ENCODE measurements at regions of chr4 and their contacts with region 1.

Region 1: GRCh38 chr4:41887821-41888686 is 47.2 kb upstream of the TMEM33 start:
- DNase-seq: peak; percentile 57 to 84 (median 76)
- H3K4me3 ChIP-seq: no peak overlapping the region
- H3K27ac ChIP-seq: no peak overlapping the region
- H3K4me1 ChIP-seq: no peaks in the 10 kb centered on the region
- H3K27me3 ChIP-seq: peaks cover 6 to 45% (median 11%) of the 10 kb centered on the region in 5 experiments

Region 2: GRCh38 chr4:41257257-41257901 is 630.7 kb before region 1 on chr4:
- CTCF ChIA-PET with region 1: interaction called, 16 read pairs
- POLR2A ChIA-PET with region 1: no interaction called
- DNase-seq: peak; percentile 58 to 86 (median 83)
- H3K4me3 ChIP-seq: peak overlapping the region; percentile 51 to 75 (median 61)
- H3K27ac ChIP-seq: no peak overlapping the region
- H3K4me1 ChIP-seq: peaks cover 5 to 25% (median 17%) of the 10 kb centered on the region in 4 experiments
- H3K27me3 ChIP-seq: peaks cover 10 to 29% (median 14%) of the 10 kb centered on the region in 5 experiments

Region 3: GRCh38 chr4:41692717-41693345 is 195.2 kb before region 1 on chr4:
- CTCF ChIA-PET with region 1: interaction called, 31 read pairs
- POLR2A ChIA-PET with region 1: no interaction called
- DNase-seq: peak; percentile 35 to 66 (median 60)
- H3K4me3 ChIP-seq: no peak overlapping the region
- H3K27ac ChIP-seq: no peak overlapping the region
- H3K4me1 ChIP-seq: no peaks in the 10 kb centered on the region
- H3K27me3 ChIP-seq: peaks cover 0 to 5% (median 0%) of the 10 kb centered on the region in 5 experiments

Region 4: GRCh38 chr4:41853973-41854372 is 34.1 kb before region 1 on chr4:
- CTCF ChIA-PET with region 1: no interaction called
- POLR2A ChIA-PET with region 1: no interaction called
- DNase-seq: no peak
- H3K4me3 ChIP-seq: no peak overlapping the region
- H3K27ac ChIP-seq: no peak overlapping the region
- H3K4me1 ChIP-seq: no peaks in the 10 kb centered on the region
- H3K27me3 ChIP-seq: peaks cover 9 to 57% (median 22%) of the 10 kb centered on the region in 5 experiments